ENCODE measurements at regions of chr9 and their contacts with region 1.

Region 1: GRCh38 chr9:86202338-86202882 is 57.0 kb downstream of the C9orf153 start:
- DNase-seq: no peak
- H3K4me3 ChIP-seq: no peak overlapping the region
- H3K27ac ChIP-seq: no peak overlapping the region
- H3K4me1 ChIP-seq: peaks cover 0 to 6% (median 0%) of the 10 kb centered on the region in 4 donors
- H3K27me3 ChIP-seq: no peaks in the 10 kb centered on the region
- CTCF ChIP-seq: peak in 3 of 4 experiments; percentile 44 to 78 (median 65)
- EP300 ChIP-seq: no peak
- POLR2A ChIP-seq: no peak

Region 2: GRCh38 chr9:86098824-86099700 is 103.3 kb before region 1 on chr9 and contains the start of gene GOLM1:
- intact Hi-C with region 1: loop called (anchors 2 kb)
- DNase-seq: peak; percentile 73
- H3K4me3 ChIP-seq: peak within 1 kb of the TSS; percentile 61 to 88 (median 76)
- H3K27ac ChIP-seq: peak within 1 kb of the TSS; percentile 73 to 81 (median 78)
- H3K4me1 ChIP-seq: peaks cover 0 to 14% (median 8%) of the 10 kb centered on the region in 4 donors
- H3K27me3 ChIP-seq: no peaks in the 10 kb centered on the region
- CTCF ChIP-seq: no peak
- EP300 ChIP-seq: no peak
- POLR2A ChIP-seq: no peak
- total RNA-seq, gene GOLM1: 9.2 to 14.3 (median 13.2) TPM